CD4-positive, alpha-beta T cell (primary cell): ENCODE measurements at regions of chr10 and their contacts with region 1.

Region 1: DNA sequence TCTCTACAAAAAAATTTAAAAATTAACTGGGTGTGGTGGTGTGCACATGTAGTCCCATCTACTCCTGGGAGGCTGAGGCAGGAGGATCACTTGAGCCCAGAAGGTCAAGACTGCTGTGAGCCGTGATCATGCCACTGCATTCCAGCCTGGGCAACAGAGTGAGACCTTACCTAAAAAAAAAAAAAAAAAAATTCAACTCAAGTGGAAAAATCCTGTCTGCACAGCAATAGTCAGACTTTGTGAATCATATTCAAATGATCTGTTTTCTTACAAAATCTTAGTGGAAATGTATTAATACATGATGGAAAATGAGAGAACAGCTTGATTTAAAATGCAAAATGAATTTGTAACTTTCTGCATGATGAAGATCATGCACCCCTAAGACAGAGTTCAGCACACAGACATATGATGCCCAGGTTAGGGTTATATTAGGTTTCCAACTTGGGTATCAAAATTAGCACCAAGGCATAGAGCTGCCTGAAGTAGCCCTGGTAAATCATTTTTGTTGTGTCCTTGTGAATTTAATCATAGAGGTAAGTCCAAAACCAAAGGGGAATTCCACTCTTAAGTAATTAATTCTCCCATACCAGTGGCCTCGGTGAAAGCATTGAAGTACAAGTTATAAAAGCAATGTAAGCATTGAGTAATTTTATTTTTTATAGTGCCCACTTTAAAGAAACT is 93.8 kb downstream of the ADD3 start:
- DNase-seq: no peak
- ATAC-seq: no peak
- H3K4me3 ChIP-seq: no peak overlapping the region
- H3K4me3 Mint-ChIP-seq: no peak overlapping the region
- H3K27ac ChIP-seq: no peak overlapping the region
- H3K27ac Mint-ChIP-seq: peak overlapping the region; percentile 74
- H3K4me1 ChIP-seq: peaks cover 9% of the 10 kb centered on the region
- H3K4me1 Mint-ChIP-seq: peaks cover 73% of the 10 kb centered on the region
- H3K27me3 ChIP-seq: no peaks in the 10 kb centered on the region
- H3K27me3 Mint-ChIP-seq: no peaks in the 10 kb centered on the region
- CTCF ChIP-seq: no peak

Region 2: DNA sequence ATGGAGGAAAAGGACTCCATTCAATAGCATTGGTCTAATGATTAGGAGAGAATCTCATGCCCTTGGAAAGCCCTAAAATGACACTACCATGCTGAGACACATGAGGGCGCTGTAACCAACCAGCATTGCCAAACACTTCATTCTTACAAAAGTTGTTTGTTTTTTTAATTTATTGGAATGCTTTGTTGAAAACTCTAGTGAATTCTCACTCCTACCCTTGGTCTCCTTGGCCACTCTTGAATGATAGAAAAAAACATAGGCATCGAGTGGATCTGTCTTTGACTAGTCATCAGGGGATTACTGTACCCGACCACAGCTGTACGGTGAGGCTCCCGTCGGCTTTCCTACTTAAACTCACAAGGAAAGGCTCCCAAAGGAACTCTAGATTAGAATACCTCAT is 123.1 kb before region 1 on chr10:
- CTCF ChIA-PET with region 1: no interaction called
- POLR2A ChIA-PET with region 1: no interaction called
- intact Hi-C with region 1: loop called in 1 of 2 experiments (anchors 2 kb)
- DNase-seq: peak; percentile 40 to 80 (median 62)
- ATAC-seq: peak; percentile 73
- H3K4me3 ChIP-seq: no peak overlapping the region
- H3K4me3 Mint-ChIP-seq: no peak overlapping the region
- H3K27ac ChIP-seq: no peak overlapping the region
- H3K27ac Mint-ChIP-seq: no peak overlapping the region
- H3K4me1 ChIP-seq: peaks cover 3% of the 10 kb centered on the region
- H3K4me1 Mint-ChIP-seq: peaks cover 17% of the 10 kb centered on the region
- H3K27me3 ChIP-seq: no peaks in the 10 kb centered on the region
- H3K27me3 Mint-ChIP-seq: no peaks in the 10 kb centered on the region
- CTCF ChIP-seq: peak; percentile 91

Region 3: GRCh38 chr10:110067960-110068770 is 33.4 kb before region 1 on chr10:
- CTCF ChIA-PET with region 1: interaction called, 3 read pairs
- POLR2A ChIA-PET with region 1: interaction called, 3 read pairs
- intact Hi-C with region 1: loop called in 1 of 2 experiments (anchors 5 kb)
- DNase-seq: peak in 9 of 14 experiments; percentile 11 to 77 (median 34)
- ATAC-seq: peak; percentile 85
- H3K4me3 ChIP-seq: peak overlapping the region; percentile 7
- H3K4me3 Mint-ChIP-seq: peak overlapping the region; percentile 74
- H3K27ac ChIP-seq: peak overlapping the region; percentile 44 to 57
- H3K27ac Mint-ChIP-seq: peak overlapping the region; percentile 87
- H3K4me1 ChIP-seq: peaks cover 38% of the 10 kb centered on the region
- H3K4me1 Mint-ChIP-seq: peaks cover 93% of the 10 kb centered on the region
- H3K27me3 ChIP-seq: no peaks in the 10 kb centered on the region
- H3K27me3 Mint-ChIP-seq: no peaks in the 10 kb centered on the region
- CTCF ChIP-seq: no peak

Region 4: GRCh38 chr10:111323389-111323966 is 1221.9 kb after region 1 on chr10:
- CTCF ChIA-PET with region 1: no interaction called
- POLR2A ChIA-PET with region 1: no interaction called
- intact Hi-C with region 1: no loop called
- DNase-seq: no peak
- ATAC-seq: no peak
- H3K4me3 ChIP-seq: no peak overlapping the region
- H3K4me3 Mint-ChIP-seq: no peak overlapping the region
- H3K27ac ChIP-seq: no peak overlapping the region
- H3K27ac Mint-ChIP-seq: no peak overlapping the region
- H3K4me1 ChIP-seq: no peaks in the 10 kb centered on the region
- H3K4me1 Mint-ChIP-seq: no peaks in the 10 kb centered on the region
- H3K27me3 ChIP-seq: peaks cover 2 to 15% of the 10 kb centered on the region in 2 experiments
- H3K27me3 Mint-ChIP-seq: peaks cover 46% of the 10 kb centered on the region
- CTCF ChIP-seq: no peak